Calu3 (cell line): ENCODE measurements at regions of chr18 and their contacts with region 1.

Region 1: GRCh38 chr18:73842795-73843394 is 304.7 kb downstream of the FBXO15 start:
- DNase-seq: peak; percentile 75
- H3K4me3 Mint-ChIP-seq: peak overlapping the region; percentile 25
- H3K27ac Mint-ChIP-seq: peak overlapping the region; percentile 33
- H3K4me1 Mint-ChIP-seq: peaks cover 13% of the 10 kb centered on the region
- H3K27me3 Mint-ChIP-seq: no peaks in the 10 kb centered on the region
- CTCF ChIP-seq: peak; percentile 93

Region 2: DNA sequence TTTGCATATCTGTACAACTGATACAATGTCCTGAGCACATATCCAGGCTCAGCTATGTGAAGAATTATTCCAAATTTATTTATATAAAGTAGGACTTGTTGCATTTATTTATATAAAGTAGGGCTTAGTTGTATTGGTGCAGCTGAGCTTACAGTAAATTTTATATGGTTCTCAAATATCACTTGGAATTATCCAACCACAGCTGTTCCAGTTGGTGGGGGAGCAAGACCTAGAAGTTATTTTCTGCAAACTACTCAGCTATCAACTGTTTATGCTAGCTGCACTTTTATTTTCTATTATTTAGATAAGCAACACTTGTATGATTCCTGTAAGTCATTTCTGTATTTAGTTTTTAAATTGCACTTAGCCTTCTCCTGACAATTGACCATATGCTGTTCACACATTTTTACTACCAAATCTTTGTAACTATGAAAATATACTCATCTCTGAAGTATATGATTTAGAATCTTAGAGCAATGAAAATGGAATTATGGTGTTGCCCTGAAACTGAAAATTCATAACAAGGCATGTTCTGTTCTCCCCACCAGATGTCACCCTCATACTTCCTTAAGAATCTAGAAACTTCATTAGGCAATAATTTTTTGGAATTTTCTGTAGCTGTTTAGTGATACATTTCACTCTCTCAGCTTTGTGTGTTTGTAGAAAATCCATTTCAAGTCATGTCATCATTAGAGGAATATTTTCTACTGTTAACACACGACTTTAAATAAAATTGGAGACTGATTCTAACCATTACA is 1141.8 kb before region 1 on chr18:
- CTCF ChIA-PET with region 1: interaction called, 3 read pairs
- intact Hi-C with region 1: loop called (anchors 2 kb)
- DNase-seq: no peak
- H3K4me3 Mint-ChIP-seq: no peak overlapping the region
- H3K27ac Mint-ChIP-seq: no peak overlapping the region
- H3K4me1 Mint-ChIP-seq: no peaks in the 10 kb centered on the region
- H3K27me3 Mint-ChIP-seq: no peaks in the 10 kb centered on the region
- CTCF ChIP-seq: peak; percentile 54

Region 3: GRCh38 chr18:72762515-72763122 is 1080.3 kb before region 1 on chr18:
- CTCF ChIA-PET with region 1: interaction called, 8 read pairs
- intact Hi-C with region 1: loop called (anchors 2 kb)
- DNase-seq: peak; percentile 32
- H3K4me3 Mint-ChIP-seq: no peak overlapping the region
- H3K27ac Mint-ChIP-seq: no peak overlapping the region
- H3K4me1 Mint-ChIP-seq: no peaks in the 10 kb centered on the region
- H3K27me3 Mint-ChIP-seq: no peaks in the 10 kb centered on the region
- CTCF ChIP-seq: peak; percentile 69

Region 4: DNA sequence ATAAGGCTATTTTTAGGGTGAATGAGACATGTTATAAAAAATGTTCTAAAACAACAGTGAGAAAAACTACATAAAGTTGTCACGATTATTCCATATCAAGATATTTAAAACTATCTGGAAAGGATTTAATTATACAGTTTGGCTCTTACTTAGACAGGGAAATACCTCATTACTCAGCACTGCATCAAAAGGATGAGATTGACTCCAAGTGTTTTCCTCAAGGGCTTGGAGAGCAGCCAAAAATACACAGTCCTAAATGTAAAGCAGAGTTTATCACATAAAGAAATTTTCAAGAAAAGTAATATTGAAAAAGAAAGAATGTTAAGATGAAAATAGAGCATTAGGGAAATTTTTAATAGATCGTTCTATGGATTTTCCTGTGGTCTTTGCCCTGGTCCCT is 689.6 kb before region 1 on chr18:
- CTCF ChIA-PET with region 1: no interaction called
- intact Hi-C with region 1: loop called (anchors 5 kb)
- DNase-seq: no peak
- H3K4me3 Mint-ChIP-seq: no peak overlapping the region
- H3K27ac Mint-ChIP-seq: no peak overlapping the region
- H3K4me1 Mint-ChIP-seq: no peaks in the 10 kb centered on the region
- H3K27me3 Mint-ChIP-seq: no peaks in the 10 kb centered on the region
- CTCF ChIP-seq: no peak

Region 5: DNA sequence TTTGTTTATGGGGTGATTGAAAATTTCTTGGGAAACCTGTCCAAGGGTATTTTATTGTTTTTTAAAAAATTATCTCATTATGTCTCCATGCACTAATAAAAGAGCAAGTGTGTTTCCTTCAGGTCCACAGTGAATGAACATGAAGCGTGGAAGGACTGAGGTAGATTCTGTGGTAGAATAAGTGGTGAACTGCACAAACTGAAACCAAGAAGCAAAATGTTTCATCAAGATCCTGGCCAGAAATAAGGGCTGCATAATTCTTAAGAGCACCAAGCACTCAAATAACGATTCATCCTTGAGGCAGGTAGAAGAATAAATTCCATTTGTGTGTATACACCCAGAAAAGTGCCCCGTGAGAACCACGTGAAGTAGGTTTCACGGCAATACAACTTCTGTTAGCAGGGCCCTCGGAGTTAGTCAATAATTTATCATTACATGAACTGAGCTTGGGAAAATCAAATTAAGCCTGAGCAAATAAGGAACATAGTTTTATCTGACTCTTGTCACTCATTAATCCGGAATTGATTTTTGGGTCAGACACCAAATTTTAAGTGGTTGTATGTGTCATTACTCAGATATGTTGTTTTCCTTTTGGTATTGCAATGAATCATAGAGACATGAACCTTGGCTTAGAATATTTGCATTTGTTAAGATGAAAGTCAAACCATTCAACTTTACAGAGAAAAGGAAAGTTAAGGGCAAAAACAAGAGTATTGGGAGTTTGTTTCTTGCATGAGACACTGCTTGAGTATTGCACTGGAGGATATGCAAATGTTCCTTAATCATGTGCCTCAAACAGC is 502.6 kb before region 1 on chr18:
- CTCF ChIA-PET with region 1: no interaction called
- intact Hi-C with region 1: loop called (anchors 5 kb)
- DNase-seq: peak; percentile 65
- H3K4me3 Mint-ChIP-seq: peak overlapping the region; percentile 64
- H3K27ac Mint-ChIP-seq: peak overlapping the region; percentile 94
- H3K4me1 Mint-ChIP-seq: peaks cover 28% of the 10 kb centered on the region
- H3K27me3 Mint-ChIP-seq: no peaks in the 10 kb centered on the region
- CTCF ChIP-seq: no peak

Region 6: DNA sequence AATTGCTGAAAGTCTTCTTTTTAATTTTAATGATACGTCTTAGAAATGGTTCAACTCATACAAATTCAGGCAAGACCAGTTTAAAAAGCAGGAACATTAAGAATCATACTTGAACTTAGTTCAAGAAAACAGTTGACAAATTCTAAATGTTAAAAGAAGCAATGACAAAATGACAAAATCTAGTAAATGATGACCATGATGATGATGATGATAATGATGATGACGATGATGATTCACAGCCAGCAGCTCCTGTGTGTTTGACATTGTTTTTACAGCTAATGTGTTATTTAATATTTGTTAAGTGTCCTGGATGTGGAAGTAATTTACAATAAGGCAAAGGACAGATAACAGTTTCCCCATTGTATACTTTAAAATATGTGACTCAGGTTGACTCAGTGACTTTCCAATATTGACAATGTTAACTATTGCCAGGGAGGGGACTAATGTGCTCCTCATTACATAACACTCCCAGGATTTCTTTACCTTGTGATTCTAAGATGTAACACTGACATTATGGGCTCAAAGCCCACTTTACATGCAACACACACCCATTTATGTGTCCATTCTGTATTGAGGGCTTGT is 297.5 kb before region 1 on chr18:
- CTCF ChIA-PET with region 1: no interaction called
- intact Hi-C with region 1: loop called (anchors 5 kb)
- DNase-seq: peak; percentile 8
- H3K4me3 Mint-ChIP-seq: no peak overlapping the region
- H3K27ac Mint-ChIP-seq: peak overlapping the region; percentile 92
- H3K4me1 Mint-ChIP-seq: peaks cover 31% of the 10 kb centered on the region
- H3K27me3 Mint-ChIP-seq: no peaks in the 10 kb centered on the region
- CTCF ChIP-seq: no peak

Region 7: DNA sequence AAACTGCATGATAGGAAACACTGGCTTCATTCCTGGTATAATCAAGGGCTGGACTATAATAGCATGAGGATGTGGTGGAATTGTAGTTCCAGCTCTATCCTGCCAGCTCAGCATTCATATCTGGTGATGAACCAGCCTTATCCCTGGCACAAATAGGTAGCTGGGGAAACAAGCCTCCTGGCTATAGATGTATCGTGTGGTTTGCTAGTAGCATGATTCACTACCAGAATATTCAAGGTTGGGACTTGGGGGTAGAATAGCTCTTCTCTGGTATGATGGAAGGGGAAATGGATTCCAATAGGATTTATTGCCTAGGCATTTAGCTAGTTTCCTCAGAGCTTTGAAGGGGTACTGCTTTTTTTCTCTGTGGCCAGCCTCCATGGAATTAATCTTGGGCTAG is 228.1 kb before region 1 on chr18:
- CTCF ChIA-PET with region 1: no interaction called
- intact Hi-C with region 1: loop called (anchors 10 kb)
- DNase-seq: peak; percentile 23
- H3K4me3 Mint-ChIP-seq: no peak overlapping the region
- H3K27ac Mint-ChIP-seq: no peak overlapping the region
- H3K4me1 Mint-ChIP-seq: peaks cover 13% of the 10 kb centered on the region
- H3K27me3 Mint-ChIP-seq: no peaks in the 10 kb centered on the region
- CTCF ChIP-seq: no peak

Region 8: GRCh38 chr18:73908323-73908722 is 65.4 kb after region 1 on chr18:
- CTCF ChIA-PET with region 1: no interaction called
- intact Hi-C with region 1: no loop called
- DNase-seq: peak; percentile 51
- H3K4me3 Mint-ChIP-seq: no peak overlapping the region
- H3K27ac Mint-ChIP-seq: no peak overlapping the region
- H3K4me1 Mint-ChIP-seq: no peaks in the 10 kb centered on the region
- H3K27me3 Mint-ChIP-seq: no peaks in the 10 kb centered on the region
- CTCF ChIP-seq: no peak